Mammary epithelial cell (primary cell): ENCODE measurements at regions of chr2 and their contacts with region 1.

Region 1: DNA sequence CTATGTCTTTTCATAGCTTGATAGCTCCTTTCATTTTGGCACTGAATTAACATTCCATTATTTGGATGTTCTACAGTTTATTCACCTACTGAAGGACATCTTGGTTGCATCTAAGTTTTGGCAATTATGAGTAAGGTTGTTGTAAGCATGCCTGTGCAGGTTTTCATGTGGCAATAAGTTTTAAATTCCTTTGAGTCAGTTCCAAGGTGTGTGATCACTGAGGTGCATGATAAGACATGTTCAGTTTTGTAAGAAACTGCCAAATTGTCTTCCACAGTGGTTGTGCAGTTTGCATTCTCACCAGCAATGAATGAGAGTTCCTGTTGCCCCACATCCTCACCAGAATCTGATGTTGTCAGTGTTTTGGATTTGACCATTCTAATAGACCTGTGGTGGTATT is 24.2 kb downstream of the XDH start:
- DNase-seq: peak; percentile 99
- H3K4me3 ChIP-seq: no peak overlapping the region
- H3K27ac ChIP-seq: peak overlapping the region; percentile 90
- H3K4me1 ChIP-seq: peaks cover 36% of the 10 kb centered on the region
- H3K27me3 ChIP-seq: no peaks in the 10 kb centered on the region
- CTCF ChIP-seq: peak in 1 of 2 donors; percentile 16

Region 2: GRCh38 chr2:31233741-31234682 is 156.3 kb before region 1 on chr2 and contains the start of gene EHD3:
- CTCF ChIA-PET with region 1: no interaction called
- dilution Hi-C with region 1: no loop called
- in situ Hi-C with region 1: no loop called
- intact Hi-C with region 1: loop called (anchors 2 kb)
- DNase-seq: peak; percentile 85
- H3K4me3 ChIP-seq: peak within 1 kb of the TSS; percentile 48 to 69 (median 49)
- H3K27ac ChIP-seq: no peak within 1 kb of the TSS
- H3K4me1 ChIP-seq: peaks cover 27% of the 10 kb centered on the region
- H3K27me3 ChIP-seq: no peaks in the 10 kb centered on the region
- CTCF ChIP-seq: peak; percentile 64 to 86
- total RNA-seq, gene EHD3: 39.4 to 53.3 TPM

Region 3: GRCh38 chr2:31363956-31364750 is 26.2 kb before region 1 on chr2:
- CTCF ChIA-PET with region 1: no interaction called
- dilution Hi-C with region 1: no loop called
- in situ Hi-C with region 1: no loop called
- intact Hi-C with region 1: no loop called
- DNase-seq: no peak
- H3K4me3 ChIP-seq: no peak overlapping the region
- H3K27ac ChIP-seq: no peak overlapping the region
- H3K4me1 ChIP-seq: no peaks in the 10 kb centered on the region
- H3K27me3 ChIP-seq: no peaks in the 10 kb centered on the region
- CTCF ChIP-seq: no peak

Region 4: DNA sequence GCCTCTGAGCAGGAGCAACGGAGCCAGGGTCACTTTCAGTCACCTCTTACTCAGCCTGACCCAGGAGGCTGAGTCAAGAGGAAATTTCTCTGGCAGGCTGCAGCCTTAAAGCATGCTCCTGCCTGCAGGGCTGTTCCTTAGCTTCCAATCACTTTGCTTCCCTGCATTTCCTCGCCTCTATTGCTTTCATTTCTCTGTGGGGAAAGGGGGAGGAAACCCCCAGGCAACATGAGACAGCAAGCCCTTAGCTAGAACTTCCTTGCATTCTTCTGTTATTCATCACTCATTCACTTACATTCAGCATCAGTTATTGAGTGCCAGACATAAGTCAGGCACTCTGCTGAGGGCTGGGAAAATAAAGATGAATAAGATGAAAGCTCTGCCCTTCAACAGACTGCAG is 11.3 kb after region 1 on chr2:
- CTCF ChIA-PET with region 1: interaction called, 5 read pairs
- dilution Hi-C with region 1: no loop called
- in situ Hi-C with region 1: no loop called
- intact Hi-C with region 1: loop called (anchors 1 kb)
- DNase-seq: peak; percentile 100
- H3K4me3 ChIP-seq: no peak overlapping the region
- H3K27ac ChIP-seq: peak overlapping the region; percentile 84
- H3K4me1 ChIP-seq: peaks cover 40% of the 10 kb centered on the region
- H3K27me3 ChIP-seq: no peaks in the 10 kb centered on the region
- CTCF ChIP-seq: no peak

Region 5: GRCh38 chr2:31413862-31414550 is 23.7 kb after region 1 on chr2:
- CTCF ChIA-PET with region 1: no interaction called
- dilution Hi-C with region 1: no loop called
- in situ Hi-C with region 1: no loop called
- intact Hi-C with region 1: loop called (anchors 1 kb)
- DNase-seq: no peak
- H3K4me3 ChIP-seq: peak overlapping the region; percentile 32 to 53 (median 38)
- H3K27ac ChIP-seq: peak overlapping the region; percentile 49
- H3K4me1 ChIP-seq: peaks cover 37% of the 10 kb centered on the region
- H3K27me3 ChIP-seq: no peaks in the 10 kb centered on the region
- CTCF ChIP-seq: peak in 1 of 2 donors; percentile 45

Region 6: GRCh38 chr2:31440764-31441163 is 50.4 kb after region 1 on chr2:
- CTCF ChIA-PET with region 1: interaction called, 11 read pairs
- dilution Hi-C with region 1: no loop called
- in situ Hi-C with region 1: no loop called
- intact Hi-C with region 1: no loop called
- DNase-seq: peak; percentile 92
- H3K4me3 ChIP-seq: no peak overlapping the region
- H3K27ac ChIP-seq: no peak overlapping the region
- H3K4me1 ChIP-seq: peaks cover 6% of the 10 kb centered on the region
- H3K27me3 ChIP-seq: no peaks in the 10 kb centered on the region
- CTCF ChIP-seq: no peak

Region 7: GRCh38 chr2:32402091-32402490 is 1011.8 kb after region 1 on chr2:
- CTCF ChIA-PET with region 1: no interaction called
- dilution Hi-C with region 1: no loop called
- in situ Hi-C with region 1: no loop called
- intact Hi-C with region 1: no loop called
- DNase-seq: no peak
- H3K4me3 ChIP-seq: no peak overlapping the region
- H3K27ac ChIP-seq: no peak overlapping the region
- H3K4me1 ChIP-seq: no peaks in the 10 kb centered on the region
- H3K27me3 ChIP-seq: no peaks in the 10 kb centered on the region
- CTCF ChIP-seq: no peak